Activated naive CD4-positive, alpha-beta T cell treated with anti-CD3 and anti-CD28 coated beads for 36 hours (primary cell): ENCODE measurements at regions of chr7 and their contacts with region 1.

Region 1: DNA sequence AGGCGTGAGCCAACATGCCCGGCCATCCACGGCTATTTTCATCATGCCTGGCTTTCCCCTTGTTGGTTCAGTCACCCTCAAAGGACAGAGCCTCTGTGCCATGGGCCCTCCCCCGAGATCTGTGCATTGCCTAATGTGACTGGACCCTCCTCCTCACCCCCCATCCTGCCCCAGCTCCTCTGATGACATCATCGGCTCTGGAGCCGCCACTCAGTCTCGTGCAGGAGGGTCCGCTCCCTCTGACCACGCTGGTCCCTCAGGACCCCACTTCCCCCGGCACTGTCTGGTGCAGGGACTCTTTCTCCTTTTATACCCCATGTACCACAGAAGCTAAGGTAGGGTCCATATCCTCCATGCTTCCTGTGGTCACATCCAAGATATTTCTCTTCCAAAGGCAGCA is 33.2 kb upstream of the BAIAP2L1 start:
- DNase-seq: no peak
- H3K4me3 Mint-ChIP-seq: no peak overlapping the region
- H3K27ac Mint-ChIP-seq: no peak overlapping the region
- H3K4me1 Mint-ChIP-seq: peaks cover 3% of the 10 kb centered on the region
- H3K27me3 Mint-ChIP-seq: no peaks in the 10 kb centered on the region

Region 2: GRCh38 chr7:97845622-97846203 is 588.4 kb before region 1 on chr7:
- CTCF ChIA-PET with region 1: no interaction called
- intact Hi-C with region 1: no loop called
- DNase-seq: peak; percentile 39
- H3K4me3 Mint-ChIP-seq: no peak overlapping the region
- H3K27ac Mint-ChIP-seq: no peak overlapping the region
- H3K4me1 Mint-ChIP-seq: no peaks in the 10 kb centered on the region
- H3K27me3 Mint-ChIP-seq: no peaks in the 10 kb centered on the region

Region 3: GRCh38 chr7:98448766-98449165 is 14.7 kb after region 1 on chr7:
- CTCF ChIA-PET with region 1: no interaction called
- intact Hi-C with region 1: no loop called
- DNase-seq: no peak
- H3K4me3 Mint-ChIP-seq: no peak overlapping the region
- H3K27ac Mint-ChIP-seq: no peak overlapping the region
- H3K4me1 Mint-ChIP-seq: no peaks in the 10 kb centered on the region
- H3K27me3 Mint-ChIP-seq: no peaks in the 10 kb centered on the region

Region 4: DNA sequence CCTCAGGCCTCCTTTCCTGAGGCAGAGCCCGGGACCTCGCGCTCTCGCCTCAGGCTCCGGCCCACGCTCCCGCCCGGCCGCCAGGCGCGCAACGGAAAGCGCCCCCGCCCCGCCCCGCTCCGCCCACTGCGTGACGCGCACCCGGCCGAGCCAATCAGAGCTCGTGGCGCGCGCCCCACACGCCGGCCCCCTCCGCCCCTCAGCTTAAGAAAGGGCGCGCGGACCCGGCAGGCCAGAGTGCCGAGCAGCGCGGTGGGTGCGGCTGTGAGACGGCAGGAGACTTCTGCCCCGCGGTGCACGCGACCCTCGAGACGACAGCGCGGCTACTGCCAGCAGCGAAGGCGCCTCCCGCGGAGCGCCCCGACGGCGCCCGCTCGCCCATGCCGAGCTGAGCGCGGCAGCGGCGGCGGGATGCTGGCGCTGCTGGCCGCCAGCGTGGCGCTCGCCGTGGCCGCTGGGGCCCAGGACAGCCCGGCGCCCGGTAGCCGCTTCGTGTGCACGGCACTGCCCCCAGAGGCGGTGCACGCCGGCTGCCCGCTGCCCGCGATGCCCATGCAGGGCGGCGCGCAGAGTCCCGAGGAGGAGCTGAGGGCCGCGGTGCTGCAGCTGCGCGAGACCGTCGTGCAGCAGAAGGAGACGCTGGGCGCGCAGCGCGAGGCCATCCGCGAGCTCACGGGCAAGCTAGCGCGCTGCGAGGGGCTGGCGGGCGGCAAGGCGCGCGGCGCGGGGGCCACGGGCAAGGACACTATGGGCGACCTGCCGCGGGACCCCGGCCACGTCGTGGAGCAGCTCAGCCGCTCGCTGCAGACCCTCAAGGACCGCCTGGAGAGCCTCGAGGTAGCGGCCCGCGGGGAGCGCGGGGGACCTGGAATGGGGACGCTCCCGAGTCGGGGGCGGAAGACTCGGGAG is 183.2 kb after region 1 on chr7 and contains the start of gene NPTX2:
- CTCF ChIA-PET with region 1: no interaction called
- intact Hi-C with region 1: loop called (anchors 10 kb)
- DNase-seq: peak; percentile 13
- H3K4me3 Mint-ChIP-seq: no peak within 1 kb of the TSS
- H3K27ac Mint-ChIP-seq: no peak within 1 kb of the TSS
- H3K4me1 Mint-ChIP-seq: peaks cover 6% of the 10 kb centered on the region
- H3K27me3 Mint-ChIP-seq: peaks cover 56% of the 10 kb centered on the region
- total RNA-seq, gene NPTX2: not detected

Region 5: GRCh38 chr7:98841179-98841997 is 407.3 kb after region 1 on chr7:
- CTCF ChIA-PET with region 1: interaction called, 26 read pairs
- intact Hi-C with region 1: loop called (anchors 1 kb)
- DNase-seq: peak; percentile 79
- H3K4me3 Mint-ChIP-seq: no peak overlapping the region
- H3K27ac Mint-ChIP-seq: no peak overlapping the region
- H3K4me1 Mint-ChIP-seq: no peaks in the 10 kb centered on the region
- H3K27me3 Mint-ChIP-seq: peaks cover 2% of the 10 kb centered on the region